Testis (tissue), 5 donors: ENCODE measurements at regions of chr10 and their contacts with region 1.

Region 1: DNA sequence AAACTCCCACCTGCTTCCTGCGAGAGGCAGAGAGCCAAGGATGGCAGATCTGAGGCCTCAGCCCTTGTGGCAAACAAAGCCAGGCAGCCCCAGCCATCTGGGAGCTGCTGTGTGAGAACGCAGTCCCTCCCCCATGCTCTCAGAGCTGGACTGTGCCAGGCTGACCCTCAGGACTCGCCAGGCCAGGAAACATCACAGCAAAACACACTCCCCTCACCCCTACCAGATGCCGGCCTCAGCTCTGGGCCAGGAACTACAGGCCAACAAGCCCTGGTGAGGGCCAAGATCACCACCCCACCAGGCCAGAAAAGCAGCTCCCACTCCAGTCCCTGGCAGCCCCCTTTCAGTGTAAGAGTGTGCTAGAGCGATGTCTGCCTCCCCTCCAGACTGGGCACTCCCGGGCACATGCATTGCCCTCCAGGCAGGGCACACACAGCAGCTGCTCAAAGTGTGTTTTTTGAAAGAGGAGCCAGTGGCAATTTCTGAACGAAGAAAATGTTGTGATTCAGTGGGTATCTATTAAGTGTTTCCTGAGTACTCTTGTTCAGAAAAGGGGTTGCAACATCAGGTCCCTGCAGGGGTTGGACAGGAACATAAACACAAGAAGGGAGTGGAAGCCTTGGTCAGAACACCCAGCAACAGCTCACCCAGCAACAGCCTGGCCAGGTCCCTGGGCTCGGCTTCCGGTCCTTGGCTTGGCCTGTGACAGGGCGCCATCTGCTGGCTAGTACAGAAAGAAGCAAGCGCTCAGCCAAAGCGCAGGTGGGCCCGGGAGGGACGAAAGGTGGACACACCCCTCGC is 18.3 kb downstream of the LRRC20 start:
- DNase-seq: peak; percentile 94
- H3K4me3 ChIP-seq: no peak overlapping the region
- H3K27ac ChIP-seq: peak overlapping the region; percentile 69 to 80
- H3K4me1 ChIP-seq: peaks cover 7% of the 10 kb centered on the region
- H3K27me3 ChIP-seq: no peaks in the 10 kb centered on the region
- CTCF ChIP-seq: peak; percentile 81 to 95 (median 92)
- POLR2A ChIP-seq: no peak

Region 2: DNA sequence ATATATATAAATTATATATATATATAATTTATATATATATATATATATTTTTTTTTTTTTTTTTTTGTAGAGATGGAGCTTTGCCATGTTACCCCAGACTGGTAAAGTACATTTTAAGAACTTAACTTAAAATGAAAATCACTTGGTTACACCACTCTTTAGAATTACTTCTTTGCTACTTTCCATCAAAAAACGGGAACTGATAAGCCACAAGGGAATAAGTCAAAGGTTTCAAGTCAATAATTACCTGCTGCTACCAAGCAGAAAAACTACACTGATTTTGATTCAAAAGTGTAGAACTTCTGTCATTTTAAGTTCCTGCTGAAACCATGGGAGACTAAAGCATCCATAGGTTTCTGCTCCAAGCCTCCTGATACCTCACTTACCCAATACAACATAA is 143.1 kb before region 1 on chr10:
- intact Hi-C with region 1: loop called (anchors 5 kb)
- DNase-seq: no peak
- H3K4me3 ChIP-seq: no peak overlapping the region
- H3K27ac ChIP-seq: no peak overlapping the region
- H3K4me1 ChIP-seq: no peaks in the 10 kb centered on the region
- H3K27me3 ChIP-seq: no peaks in the 10 kb centered on the region
- CTCF ChIP-seq: no peak
- POLR2A ChIP-seq: no peak